IMR-90 (cell line): ENCODE measurements at regions of chr18 and their contacts with region 1.

Region 1: DNA sequence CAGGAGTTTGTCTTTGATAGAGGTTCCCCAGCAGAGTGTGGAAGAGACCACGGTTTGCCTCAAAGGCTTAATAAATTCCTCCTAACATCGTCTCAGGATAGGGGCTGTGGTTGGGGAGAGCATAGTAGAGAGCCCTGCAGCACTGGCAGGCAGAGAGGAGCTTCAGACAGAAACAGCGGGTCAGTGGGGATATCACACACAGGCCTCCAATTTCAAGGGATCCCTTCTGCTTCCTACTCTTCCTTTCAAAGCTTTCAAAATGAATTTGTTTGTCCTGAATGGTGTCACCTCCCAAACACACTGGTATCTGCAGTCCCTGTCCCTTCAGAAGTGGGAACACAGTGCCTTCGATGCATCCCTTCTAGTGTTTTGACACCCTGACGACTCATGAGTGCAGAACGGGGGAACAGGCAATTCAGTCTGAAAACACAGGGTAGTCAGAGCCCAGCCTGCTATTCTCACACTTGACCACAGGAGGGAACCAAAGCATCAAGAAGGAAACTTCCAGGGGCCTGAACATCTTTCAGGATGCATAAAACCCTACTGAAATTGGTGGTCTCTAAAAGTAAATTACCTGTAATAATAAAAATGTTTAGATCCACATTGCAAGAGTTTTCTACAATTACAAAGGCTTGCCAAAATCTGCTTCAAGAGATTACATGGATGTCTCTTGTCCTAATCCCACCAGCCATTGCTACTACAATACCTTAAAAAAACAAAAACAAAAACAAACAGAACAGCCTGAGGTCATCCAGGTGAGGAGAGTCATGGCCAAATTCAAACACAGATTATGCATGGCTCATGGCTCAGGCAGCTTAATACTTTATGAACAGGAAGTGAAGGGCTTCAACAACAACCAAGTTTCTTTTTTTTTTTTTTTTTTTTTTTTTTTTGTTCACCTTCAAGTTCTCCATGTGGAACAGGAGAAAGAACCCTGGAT is 49.8 kb downstream of the SLC14A2 start:
- DNase-seq: peak; percentile 68
- ATAC-seq: peak; percentile 81
- H3K4me3 ChIP-seq: no peak overlapping the region
- H3K27ac ChIP-seq: no peak overlapping the region
- H3K4me1 ChIP-seq: peaks cover 8% of the 10 kb centered on the region
- H3K27me3 ChIP-seq: no peaks in the 10 kb centered on the region
- CTCF ChIP-seq: peak; percentile 94
- POLR2A ChIP-seq: peak; percentile 39; the same call in 1 of the 2 replicates
- RAD21 ChIP-seq: peak; percentile 96

Region 2: GRCh38 chr18:46073474-46074331 is 408.6 kb after region 1 on chr18:
- CTCF ChIA-PET with region 1: interaction called, 4 read pairs
- POLR2A ChIA-PET with region 1: no interaction called
- dilution Hi-C with region 1: no loop called
- in situ Hi-C with region 1: loop called (anchors 10 kb)
- intact Hi-C with region 1: loop called (anchors 1 kb)
- DNase-seq: peak; percentile 69
- ATAC-seq: peak; percentile 52
- H3K4me3 ChIP-seq: no peak overlapping the region
- H3K27ac ChIP-seq: no peak overlapping the region
- H3K4me1 ChIP-seq: peaks cover 20% of the 10 kb centered on the region
- H3K27me3 ChIP-seq: no peaks in the 10 kb centered on the region
- CTCF ChIP-seq: peak; percentile 76
- POLR2A ChIP-seq: no peak
- RAD21 ChIP-seq: peak; percentile 82